ENCODE measurements at regions of chr5 and their contacts with region 1.

Region 1: DNA sequence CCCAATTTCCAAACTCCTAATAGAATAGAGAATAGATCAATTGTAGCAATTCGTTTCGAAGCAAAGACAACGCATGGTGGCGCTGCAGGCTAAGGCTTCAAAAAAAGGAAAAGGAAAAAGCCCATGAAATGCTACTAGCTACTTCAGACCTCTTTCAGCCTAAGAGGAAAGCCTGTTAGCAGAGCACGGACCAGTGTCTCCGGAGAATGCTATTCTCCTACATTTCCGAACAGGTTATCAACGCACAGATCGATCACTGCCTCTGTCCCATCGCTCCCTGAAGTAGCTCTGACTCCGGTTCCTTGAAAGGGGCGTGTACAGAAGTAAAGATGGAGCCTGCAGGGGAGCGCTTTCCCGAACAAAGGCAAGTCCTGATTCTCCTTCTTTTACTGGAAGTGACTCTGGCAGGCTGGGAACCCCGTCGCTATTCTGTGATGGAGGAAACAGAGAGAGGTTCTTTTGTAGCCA is at the start of gene PCDHB15:
- DNase-seq: peak in 1 of 2 experiments; percentile 83
- H3K4me3 ChIP-seq: peak within 1 kb of the TSS; percentile 19 to 69 (median 44); a peak in 7 of 8 replicates
- H3K27ac ChIP-seq: no peak within 1 kb of the TSS
- H3K4me1 ChIP-seq: peaks cover 0 to 3% (median 0%) of the 10 kb centered on the region in 4 experiments; a peak in 1 of 7 replicates
- H3K27me3 ChIP-seq: no peaks in the 10 kb centered on the region
- CTCF ChIP-seq: peak in 2 of 3 experiments; percentile 61 to 64; a peak in 3 of 4 replicates
- EP300 ChIP-seq: no peak
- POLR2A ChIP-seq: peak in 1 of 2 experiments; percentile 55; a peak in 1 of 3 replicates
- RAD21 ChIP-seq: peak; percentile 78 to 80
- total RNA-seq, gene PCDHB15: 3.9 and 4.0 TPM in 2 replicates

Region 2: DNA sequence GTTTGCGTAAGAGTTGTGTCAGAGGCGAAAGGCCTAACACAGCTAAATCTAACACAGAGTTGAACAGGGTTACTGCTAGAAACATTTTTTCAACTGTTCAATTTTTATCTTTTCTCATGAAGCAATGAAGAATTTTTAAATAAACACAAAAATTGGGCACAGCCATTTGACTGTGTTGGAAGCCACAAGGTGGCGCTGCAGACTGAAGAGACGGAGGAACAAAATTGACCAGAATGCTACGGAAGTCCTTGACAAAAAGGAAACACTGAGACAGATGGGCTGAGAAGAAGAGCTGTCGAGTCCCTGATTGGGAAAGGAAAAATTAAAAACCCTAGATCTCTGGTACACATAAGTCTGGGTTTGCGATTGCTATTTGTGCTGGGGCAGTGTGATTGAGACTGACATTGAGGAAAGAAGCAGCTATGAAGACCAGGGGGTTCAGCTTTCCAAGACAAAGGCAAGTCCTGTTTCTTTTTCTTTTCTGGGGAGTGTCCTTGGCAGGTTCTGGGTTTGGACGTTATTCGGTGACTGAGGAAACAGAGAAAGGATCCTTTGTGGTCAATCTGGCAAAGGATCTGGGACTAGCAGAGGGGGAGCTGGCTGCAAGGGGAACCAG is 58.3 kb before region 1 on chr5 and contains the start of gene PCDHB9:
- CTCF ChIA-PET with region 1: interaction called, 25 read pairs
- POLR2A ChIA-PET with region 1: no interaction called
- DNase-seq: peak in 1 of 2 experiments; percentile 80
- H3K4me3 ChIP-seq: peak within 1 kb of the TSS in 2 of 4 experiments; percentile 11 to 27; a peak in 1 of 8 replicates
- H3K27ac ChIP-seq: no peak within 1 kb of the TSS
- H3K4me1 ChIP-seq: 0 out of 7 replicates have a peak, but pooled peaks cover 0 to 2% (median 0%) of the 10 kb centered on the region in 4 experiments
- H3K27me3 ChIP-seq: no peaks in the 10 kb centered on the region
- CTCF ChIP-seq: peak; percentile 53 to 83 (median 81)
- EP300 ChIP-seq: no peak
- POLR2A ChIP-seq: no peak
- RAD21 ChIP-seq: peak; percentile 52 to 61
- total RNA-seq, gene PCDHB9: 1.6 and 3.8 TPM in 2 replicates

Region 3: GRCh38 chr5:141223112-141223783 is 22.0 kb before region 1 on chr5 and contains the start of gene PCDHB14:
- CTCF ChIA-PET with region 1: interaction called, 40 read pairs
- POLR2A ChIA-PET with region 1: interaction called, 9 read pairs
- DNase-seq: no peak
- H3K4me3 ChIP-seq: peak within 1 kb of the TSS; percentile 8 to 50 (median 29); a peak in 5 of 8 replicates
- H3K27ac ChIP-seq: no peak within 1 kb of the TSS
- H3K4me1 ChIP-seq: peaks cover 2 to 3% (median 3%) of the 10 kb centered on the region in 4 experiments; a peak in 2 of 7 replicates
- H3K27me3 ChIP-seq: no peaks in the 10 kb centered on the region
- CTCF ChIP-seq: peak in 2 of 3 experiments; percentile 50 to 64; a peak in 3 of 4 replicates
- EP300 ChIP-seq: no peak
- POLR2A ChIP-seq: no peak
- RAD21 ChIP-seq: peak; percentile 81 to 85
- total RNA-seq, gene PCDHB14: 2.7 and 2.9 TPM in 2 replicates

Region 4: GRCh38 chr5:141326088-141326854 is 81.0 kb after region 1 on chr5:
- CTCF ChIA-PET with region 1: interaction called, 10 read pairs
- POLR2A ChIA-PET with region 1: interaction called, 3 read pairs
- DNase-seq: peak in 1 of 2 experiments; percentile 73
- H3K4me3 ChIP-seq: peak overlapping the region; percentile 31 to 54 (median 50)
- H3K27ac ChIP-seq: no peak overlapping the region
- H3K4me1 ChIP-seq: no peaks in the 10 kb centered on the region
- H3K27me3 ChIP-seq: no peaks in the 10 kb centered on the region
- CTCF ChIP-seq: peak; percentile 58 to 74 (median 71)
- EP300 ChIP-seq: no peak
- POLR2A ChIP-seq: peak in 1 of 2 experiments; percentile 56; a peak in 1 of 3 replicates
- RAD21 ChIP-seq: peak; percentile 47 to 63

Region 5: GRCh38 chr5:141402553-141403260 is 157.4 kb after region 1 on chr5 and contains the start of gene PCDHGA9:
- CTCF ChIA-PET with region 1: interaction called, 29 read pairs
- POLR2A ChIA-PET with region 1: no interaction called
- DNase-seq: no peak
- H3K4me3 ChIP-seq: no peak within 1 kb of the TSS
- H3K27ac ChIP-seq: no peak within 1 kb of the TSS
- H3K4me1 ChIP-seq: no peaks in the 10 kb centered on the region
- H3K27me3 ChIP-seq: no peaks in the 10 kb centered on the region
- CTCF ChIP-seq: peak in 2 of 3 experiments; percentile 21 to 35; a peak in 3 of 4 replicates
- EP300 ChIP-seq: no peak
- POLR2A ChIP-seq: no peak
- RAD21 ChIP-seq: peak; percentile 33 to 46
- total RNA-seq, gene PCDHGA9: 1.1 and 1.2 TPM in 2 replicates

Region 6: DNA sequence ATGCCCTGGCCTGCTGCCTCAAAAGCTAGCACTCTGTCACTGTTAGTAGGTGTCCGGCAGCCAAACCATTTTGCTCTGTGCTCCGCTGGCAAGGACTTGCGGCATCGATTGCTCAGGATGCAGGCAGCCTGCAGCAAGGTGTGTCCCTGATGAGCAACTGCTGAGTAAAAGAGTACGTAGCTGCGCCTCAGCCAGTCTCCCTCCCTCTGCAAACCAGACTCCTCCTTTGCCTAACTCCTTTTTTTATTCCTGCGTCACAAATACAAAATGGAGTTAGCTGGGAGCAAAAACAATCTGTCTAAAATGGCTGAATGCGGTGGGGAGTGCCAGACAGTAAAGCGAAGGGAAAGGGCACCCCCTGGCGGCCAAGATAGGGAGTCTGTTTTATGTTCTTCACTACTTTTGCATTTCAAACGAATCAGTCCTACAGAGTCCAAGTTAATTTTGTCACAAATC is 312.4 kb after region 1 on chr5:
- CTCF ChIA-PET with region 1: interaction called, 33 read pairs
- POLR2A ChIA-PET with region 1: interaction called, 9 read pairs
- DNase-seq: peak; percentile 82 to 89
- H3K4me3 ChIP-seq: peak overlapping the region in 1 of 4 experiments; percentile 25; a peak in 2 of 8 replicates
- H3K27ac ChIP-seq: peak overlapping the region; percentile 90
- H3K4me1 ChIP-seq: peaks cover 3 to 18% (median 6%) of the 10 kb centered on the region in 4 experiments; a peak in 6 of 7 replicates
- H3K27me3 ChIP-seq: no peaks in the 10 kb centered on the region
- CTCF ChIP-seq: peak; percentile 65 to 85 (median 81)
- EP300 ChIP-seq: peak in 1 of 2 experiments; percentile 54; a peak in 1 of 3 replicates
- POLR2A ChIP-seq: peak; percentile 44 to 60
- RAD21 ChIP-seq: peak; percentile 84 to 87